HCT116 (cell line): ENCODE measurements at regions of chr14 and their contacts with region 1.

Region 1: GRCh38 chr14:90331497-90332435 is at the start of gene NRDE2:
- DNase-seq: peak; percentile 90
- ATAC-seq: peak; percentile 97
- H3K4me3 ChIP-seq: peak within 1 kb of the TSS; percentile 69 to 73
- H3K27ac ChIP-seq: peak within 1 kb of the TSS; percentile 81
- H3K4me1 ChIP-seq: peaks cover 13 to 16% of the 10 kb centered on the region in 2 experiments; a peak in 3 of 4 replicates
- H3K27me3 ChIP-seq: 0 out of 2 replicates have a peak, but pooled peaks cover 5% of the 10 kb centered on the region
- CTCF ChIP-seq: no peak
- POLR2A ChIP-seq: peak; percentile 79
- RAD21 ChIP-seq: no peak
- total RNA-seq, gene NRDE2: 20.1 TPM

Region 2: DNA sequence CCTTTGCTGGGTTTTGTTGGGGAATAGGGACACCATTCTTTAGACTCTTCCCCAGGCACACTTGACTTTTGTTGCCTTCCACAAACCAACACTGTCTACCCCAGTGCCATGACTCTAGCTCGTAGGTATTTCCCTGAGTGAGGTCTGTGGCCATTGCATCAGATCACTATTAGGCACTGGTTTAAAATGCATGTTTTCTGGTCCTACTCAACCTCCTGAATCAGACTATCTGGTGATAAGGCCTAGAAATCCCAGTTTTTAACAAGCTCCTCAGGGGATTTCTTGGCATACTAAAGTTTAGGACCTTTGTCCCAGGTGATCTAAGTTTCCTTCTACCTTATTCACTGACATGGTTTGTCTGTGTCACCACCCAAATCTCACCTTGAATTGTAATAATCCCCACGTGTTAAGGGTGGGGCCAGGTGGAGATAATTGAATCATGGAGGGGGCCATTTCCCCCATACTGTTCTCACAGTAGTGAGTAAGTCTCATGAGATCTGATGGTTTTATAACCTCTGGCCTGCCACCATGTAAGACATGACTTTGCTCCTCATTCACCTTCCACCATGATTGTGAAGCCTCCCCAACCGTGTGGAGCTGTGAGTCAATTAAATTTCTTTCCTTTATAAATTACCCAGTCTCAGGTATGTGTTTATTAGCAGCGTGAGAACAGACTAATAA is 163.2 kb before region 1 on chr14:
- CTCF ChIA-PET with region 1: no interaction called
- POLR2A ChIA-PET with region 1: no interaction called
- RAD21 ChIA-PET with region 1: no interaction called
- intact Hi-C with region 1: no loop called
- DNase-seq: no peak
- ATAC-seq: no peak
- H3K4me3 ChIP-seq: no peak overlapping the region
- H3K27ac ChIP-seq: no peak overlapping the region
- H3K4me1 ChIP-seq: no peaks in the 10 kb centered on the region
- H3K27me3 ChIP-seq: no peaks in the 10 kb centered on the region
- CTCF ChIP-seq: no peak
- POLR2A ChIP-seq: no peak
- RAD21 ChIP-seq: no peak

Region 3: DNA sequence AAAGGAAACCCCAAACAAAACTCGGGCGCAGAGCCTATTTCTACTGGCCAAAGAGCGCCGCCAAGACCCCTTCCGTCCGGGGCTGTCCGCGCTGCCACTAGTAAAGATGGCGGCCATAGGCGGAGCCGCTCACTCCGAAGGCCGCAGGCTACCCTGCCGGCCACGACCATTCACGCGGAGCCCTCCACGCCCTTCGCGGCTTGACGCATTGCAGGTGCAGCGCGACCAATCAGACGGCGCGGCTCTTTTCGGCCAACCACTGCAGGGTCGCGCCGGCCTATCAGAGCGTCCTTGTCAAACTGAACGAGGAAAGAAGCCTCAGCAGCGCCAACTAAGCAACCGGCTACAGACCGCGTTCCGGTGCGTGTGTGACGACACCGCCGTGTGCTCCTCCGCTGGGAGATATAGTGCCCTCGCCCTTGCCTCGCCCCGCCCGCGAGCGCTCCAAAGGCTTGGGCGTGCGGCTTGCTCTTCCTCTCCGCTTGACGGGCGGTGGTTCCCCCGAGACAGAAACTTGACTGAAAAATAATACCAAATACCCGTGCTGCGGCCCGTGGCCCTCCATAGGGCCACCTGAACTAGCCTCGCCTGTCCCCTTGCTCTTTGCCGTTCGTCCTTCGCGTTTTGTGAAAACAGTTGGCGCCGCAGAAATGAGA is 51.4 kb after region 1 on chr14:
- CTCF ChIA-PET with region 1: no interaction called
- POLR2A ChIA-PET with region 1: no interaction called
- RAD21 ChIA-PET with region 1: no interaction called
- intact Hi-C with region 1: loop called (anchors 2 kb)
- DNase-seq: peak; percentile 99
- ATAC-seq: peak; percentile 98
- H3K4me3 ChIP-seq: peak overlapping the region; percentile 81 to 86
- H3K27ac ChIP-seq: peak overlapping the region; percentile 70
- H3K4me1 ChIP-seq: peaks cover 11 to 23% of the 10 kb centered on the region in 2 experiments
- H3K27me3 ChIP-seq: no peaks in the 10 kb centered on the region
- CTCF ChIP-seq: no peak
- POLR2A ChIP-seq: peak; percentile 29
- RAD21 ChIP-seq: no peak